Activated T-helper 1 cell treated with anti-CD3 and anti-CD28 coated beads, Interleukin-12 subunit alpha, Interleukin-12 subunit beta, Interleukin-2, Interleukin-4 antibody, amounts not matched to agents 30 ng/mL and 10 ng/mL and 1 ng/mL, durations not matched to agents 14 hours and 24 hours and 36 hours (primary cell): ENCODE measurements at regions of chr16 and their contacts with region 1.

Region 1: DNA sequence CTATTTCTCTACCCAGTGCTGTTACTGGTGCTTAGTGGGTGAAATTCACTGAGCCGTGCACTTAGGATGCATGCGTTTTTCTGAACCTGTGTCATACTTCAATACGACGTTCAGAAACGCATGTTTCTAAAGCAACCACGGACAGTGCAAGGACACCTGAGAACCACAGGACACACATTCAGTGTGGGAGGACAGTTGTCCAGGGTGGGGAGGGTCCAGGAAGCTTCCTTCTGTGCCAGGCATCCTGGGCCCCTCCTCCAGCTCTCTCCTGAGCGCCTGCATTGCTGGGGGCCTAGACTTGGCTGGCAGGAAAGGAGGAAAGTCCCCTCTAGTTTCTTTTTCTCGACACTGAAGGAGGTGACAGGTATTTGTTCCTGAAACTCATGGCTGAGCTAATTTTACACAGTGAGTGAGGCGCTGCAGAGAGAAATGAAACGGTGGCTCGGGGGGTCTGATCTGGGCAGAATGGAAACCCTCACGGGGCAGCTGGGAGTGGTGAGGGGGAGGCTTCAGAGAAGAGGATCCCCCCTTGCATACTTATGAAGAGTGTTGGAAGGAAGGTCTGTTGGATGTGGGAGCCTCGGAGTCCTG is 89.9 kb downstream of the IRF8 start:
- DNase-seq: peak; percentile 6
- H3K4me3 Mint-ChIP-seq: peak overlapping the region; percentile 73
- H3K27ac Mint-ChIP-seq: peak overlapping the region; percentile 99
- H3K4me1 Mint-ChIP-seq: peaks cover 68% of the 10 kb centered on the region
- H3K27me3 Mint-ChIP-seq: peaks cover 1% of the 10 kb centered on the region

Region 2: GRCh38 chr16:85821441-85822135 is 167.2 kb before region 1 on chr16:
- intact Hi-C with region 1: loop called (anchors 1 kb)
- DNase-seq: peak; percentile 68
- H3K4me3 Mint-ChIP-seq: no peak overlapping the region
- H3K27ac Mint-ChIP-seq: no peak overlapping the region
- H3K4me1 Mint-ChIP-seq: no peaks in the 10 kb centered on the region
- H3K27me3 Mint-ChIP-seq: peaks cover 8% of the 10 kb centered on the region

Region 3: GRCh38 chr16:85869785-85870558 is 118.8 kb before region 1 on chr16:
- intact Hi-C with region 1: loop called (anchors 1 kb)
- DNase-seq: no peak
- H3K4me3 Mint-ChIP-seq: no peak overlapping the region
- H3K27ac Mint-ChIP-seq: peak overlapping the region; percentile 31
- H3K4me1 Mint-ChIP-seq: peaks cover 28% of the 10 kb centered on the region
- H3K27me3 Mint-ChIP-seq: peaks cover 29% of the 10 kb centered on the region

Region 4: DNA sequence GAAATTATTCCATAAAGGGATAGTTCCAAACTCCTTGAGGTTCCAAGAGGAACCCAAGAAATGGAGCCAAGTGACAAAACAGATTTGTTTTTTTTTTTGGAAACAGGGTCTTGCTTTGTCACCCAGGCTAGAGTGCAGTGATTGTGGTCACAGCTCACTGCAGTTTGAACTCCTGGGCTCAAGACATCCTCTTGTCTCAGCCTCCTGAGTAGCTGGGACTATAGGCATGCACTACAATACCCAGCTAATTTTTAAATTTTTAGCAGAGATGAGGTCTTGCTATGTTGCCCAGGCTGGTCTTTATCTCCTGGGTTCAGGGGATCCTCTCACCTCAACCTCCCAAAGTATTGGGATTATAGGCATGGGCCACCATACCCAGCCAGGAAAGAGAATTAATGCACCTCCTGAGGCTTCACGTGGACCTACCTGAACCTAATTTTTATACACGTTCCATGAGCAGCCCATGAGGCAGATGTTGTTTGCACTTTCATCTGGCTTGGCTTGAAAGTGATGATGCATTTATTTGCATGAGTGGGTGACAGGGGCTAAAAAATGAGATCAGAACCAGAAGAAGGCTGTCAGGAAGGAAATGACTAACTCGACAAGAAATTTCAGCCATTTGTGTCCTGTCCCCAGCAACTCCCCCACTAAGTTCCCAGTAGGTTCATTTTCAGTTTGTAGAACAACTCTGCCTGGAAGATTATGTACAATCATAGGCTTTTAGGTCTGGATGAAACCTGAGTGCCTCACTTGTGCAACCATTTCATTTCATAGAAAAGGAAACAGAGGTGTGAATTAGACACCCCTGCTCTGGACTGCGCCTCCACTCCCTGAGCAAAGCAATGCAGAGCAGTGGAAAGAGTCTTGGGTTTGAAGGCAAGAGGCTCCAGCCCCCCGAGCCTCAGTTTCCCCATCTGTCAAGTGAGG is 100.2 kb before region 1 on chr16:
- intact Hi-C with region 1: loop called (anchors 1 kb)
- DNase-seq: peak; percentile 18
- H3K4me3 Mint-ChIP-seq: peak overlapping the region; percentile 43
- H3K27ac Mint-ChIP-seq: peak overlapping the region; percentile 67
- H3K4me1 Mint-ChIP-seq: peaks cover 38% of the 10 kb centered on the region
- H3K27me3 Mint-ChIP-seq: peaks cover 21% of the 10 kb centered on the region

Region 5: DNA sequence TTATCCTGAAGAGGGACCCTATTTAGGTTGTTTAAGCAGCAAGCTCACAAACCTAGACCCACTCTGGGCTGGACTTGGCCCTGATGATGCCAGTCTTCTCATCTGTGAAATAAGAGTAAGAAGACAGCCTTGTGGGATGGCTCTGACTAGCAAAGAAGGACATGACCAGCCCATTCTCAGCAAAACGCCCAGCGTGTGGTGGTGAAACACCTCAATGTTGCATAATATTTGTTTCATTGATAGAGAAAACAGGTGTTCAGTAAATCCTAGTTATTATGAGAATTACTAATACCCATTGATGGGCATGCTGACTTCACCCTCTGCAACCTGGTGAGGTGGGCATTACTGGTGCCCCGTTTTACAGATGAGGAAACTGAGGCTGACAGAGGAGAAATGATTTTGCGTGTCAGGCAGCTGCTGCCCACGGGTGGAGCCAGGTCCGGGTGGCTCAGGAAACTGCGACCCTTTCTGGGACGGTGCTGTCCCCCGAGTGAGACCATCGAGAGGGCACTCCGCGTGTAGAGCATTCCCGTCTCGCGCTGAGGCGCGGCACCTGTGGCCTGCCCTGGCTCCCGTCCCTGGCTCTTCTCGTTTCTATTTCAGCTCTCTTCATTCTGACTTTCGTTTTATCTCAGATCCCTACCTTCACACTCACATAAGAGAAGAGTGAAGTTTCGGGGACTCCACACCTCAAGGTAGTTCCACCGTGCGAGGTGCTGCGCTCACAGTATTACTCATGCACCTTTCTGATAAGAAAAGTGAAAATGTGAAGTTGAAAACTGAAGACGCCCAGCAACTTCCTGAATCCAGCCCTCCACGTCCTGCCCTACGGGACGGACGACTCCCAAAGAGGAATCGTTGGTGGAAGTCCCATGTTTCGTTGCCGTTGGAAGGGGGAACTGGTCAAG is 41.3 kb before region 1 on chr16:
- intact Hi-C with region 1: loop called (anchors 2 kb)
- DNase-seq: peak; percentile 20
- H3K4me3 Mint-ChIP-seq: peak overlapping the region; percentile 40
- H3K27ac Mint-ChIP-seq: peak overlapping the region; percentile 59
- H3K4me1 Mint-ChIP-seq: peaks cover 58% of the 10 kb centered on the region
- H3K27me3 Mint-ChIP-seq: peaks cover 12% of the 10 kb centered on the region

Region 6: GRCh38 chr16:86007524-86007923 is 18.7 kb after region 1 on chr16:
- intact Hi-C with region 1: loop called (anchors 1 kb)
- DNase-seq: no peak
- H3K4me3 Mint-ChIP-seq: no peak overlapping the region
- H3K27ac Mint-ChIP-seq: no peak overlapping the region
- H3K4me1 Mint-ChIP-seq: peaks cover 17% of the 10 kb centered on the region
- H3K27me3 Mint-ChIP-seq: no peaks in the 10 kb centered on the region

Region 7: DNA sequence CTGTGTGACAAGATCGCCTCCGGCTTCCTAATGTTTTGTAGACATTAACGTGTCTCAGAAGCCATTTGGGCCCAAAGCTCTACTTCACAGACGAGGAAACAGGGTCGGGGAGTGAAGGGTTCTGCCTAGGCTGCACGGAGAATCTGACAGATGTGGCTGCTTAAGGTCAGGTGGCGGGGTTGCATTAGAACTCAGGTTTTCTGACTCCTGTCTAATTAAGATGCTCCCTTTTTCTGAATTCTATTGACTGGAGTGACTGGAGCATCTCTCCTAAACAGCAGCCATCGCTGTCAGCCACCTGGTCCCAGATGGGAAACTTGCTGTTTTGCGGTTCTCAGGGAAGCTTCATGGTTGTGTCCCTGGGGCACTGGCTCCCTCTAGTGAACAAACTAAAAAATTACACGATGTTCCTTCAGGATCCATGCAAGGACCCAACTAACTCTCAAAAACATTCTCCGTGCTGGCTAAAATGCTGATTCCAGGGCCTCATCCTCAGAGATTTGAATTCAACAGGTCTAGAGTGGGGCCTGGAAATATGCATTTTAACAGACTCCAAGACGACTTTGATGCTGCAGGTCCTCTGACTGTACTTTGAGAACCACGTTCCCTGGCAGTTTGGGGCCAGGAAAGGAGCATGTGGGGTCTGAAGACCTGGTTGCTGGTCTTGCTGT is 27.5 kb after region 1 on chr16:
- intact Hi-C with region 1: loop called (anchors 2 kb)
- DNase-seq: peak; percentile 10
- H3K4me3 Mint-ChIP-seq: no peak overlapping the region
- H3K27ac Mint-ChIP-seq: no peak overlapping the region
- H3K4me1 Mint-ChIP-seq: no peaks in the 10 kb centered on the region
- H3K27me3 Mint-ChIP-seq: peaks cover 14% of the 10 kb centered on the region

Region 8: GRCh38 chr16:86029131-86029741 is 40.4 kb after region 1 on chr16:
- intact Hi-C with region 1: no loop called
- DNase-seq: no peak
- H3K4me3 Mint-ChIP-seq: no peak overlapping the region
- H3K27ac Mint-ChIP-seq: no peak overlapping the region
- H3K4me1 Mint-ChIP-seq: no peaks in the 10 kb centered on the region
- H3K27me3 Mint-ChIP-seq: peaks cover 16% of the 10 kb centered on the region

Region 9: GRCh38 chr16:86118467-86119307 is 129.9 kb after region 1 on chr16:
- intact Hi-C with region 1: no loop called
- DNase-seq: no peak
- H3K4me3 Mint-ChIP-seq: no peak overlapping the region
- H3K27ac Mint-ChIP-seq: no peak overlapping the region
- H3K4me1 Mint-ChIP-seq: no peaks in the 10 kb centered on the region
- H3K27me3 Mint-ChIP-seq: peaks cover 3% of the 10 kb centered on the region

Region 10: GRCh38 chr16:87531418-87531817 is 1542.6 kb after region 1 on chr16:
- intact Hi-C with region 1: no loop called
- DNase-seq: no peak
- H3K4me3 Mint-ChIP-seq: no peak overlapping the region
- H3K27ac Mint-ChIP-seq: no peak overlapping the region
- H3K4me1 Mint-ChIP-seq: no peaks in the 10 kb centered on the region
- H3K27me3 Mint-ChIP-seq: peaks cover 13% of the 10 kb centered on the region